ENCODE measurements at regions of chr3 and their contacts with region 1.

Region 1: GRCh38 chr3:183515968-183516851 is 39.3 kb downstream of the KLHL6 start:
- DNase-seq: peak; percentile 73
- H3K4me3 Mint-ChIP-seq: no peak overlapping the region
- H3K27ac Mint-ChIP-seq: peak overlapping the region; percentile 87
- H3K4me1 Mint-ChIP-seq: peaks cover 75% of the 10 kb centered on the region
- H3K27me3 Mint-ChIP-seq: no peaks in the 10 kb centered on the region

Region 2: DNA sequence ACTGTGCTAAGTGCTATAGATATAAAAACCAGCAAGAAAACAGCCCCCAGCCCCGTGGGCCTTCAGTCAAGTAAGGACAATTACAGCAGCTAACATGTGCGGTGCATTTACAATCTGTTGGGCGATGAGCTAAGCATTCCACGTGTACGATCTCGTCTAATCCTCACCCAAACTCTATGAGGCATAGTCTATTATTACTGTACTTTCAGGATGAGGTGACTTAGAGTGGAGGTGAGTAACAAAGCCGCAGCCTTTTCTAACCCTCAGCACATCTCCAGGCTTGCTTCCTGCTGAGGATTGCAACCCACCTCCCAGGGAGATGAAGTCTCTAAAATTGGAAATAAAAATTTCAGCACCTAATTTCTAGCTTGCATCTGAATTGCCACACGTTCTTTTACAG is 34.6 kb before region 1 on chr3:
- CTCF ChIA-PET with region 1: interaction called, 3 read pairs
- POLR2A ChIA-PET with region 1: no interaction called
- intact Hi-C with region 1: loop called (anchors 2 kb)
- DNase-seq: peak; percentile 49
- H3K4me3 Mint-ChIP-seq: no peak overlapping the region
- H3K27ac Mint-ChIP-seq: no peak overlapping the region
- H3K4me1 Mint-ChIP-seq: peaks cover 6% of the 10 kb centered on the region
- H3K27me3 Mint-ChIP-seq: no peaks in the 10 kb centered on the region

Region 3: GRCh38 chr3:183527428-183528379 is 11.5 kb after region 1 on chr3:
- CTCF ChIA-PET with region 1: interaction called, 6 read pairs
- POLR2A ChIA-PET with region 1: no interaction called
- intact Hi-C with region 1: loop called (anchors 1 kb)
- DNase-seq: peak; percentile 31
- H3K4me3 Mint-ChIP-seq: no peak overlapping the region
- H3K27ac Mint-ChIP-seq: peak overlapping the region; percentile 82
- H3K4me1 Mint-ChIP-seq: peaks cover 66% of the 10 kb centered on the region
- H3K27me3 Mint-ChIP-seq: no peaks in the 10 kb centered on the region

Region 4: GRCh38 chr3:183591881-183592521 is 75.8 kb after region 1 on chr3:
- CTCF ChIA-PET with region 1: interaction called, 4 read pairs
- POLR2A ChIA-PET with region 1: no interaction called
- intact Hi-C with region 1: loop called (anchors 1 kb)
- DNase-seq: no peak
- H3K4me3 Mint-ChIP-seq: peak overlapping the region; percentile 59
- H3K27ac Mint-ChIP-seq: peak overlapping the region; percentile 69
- H3K4me1 Mint-ChIP-seq: peaks cover 32% of the 10 kb centered on the region
- H3K27me3 Mint-ChIP-seq: no peaks in the 10 kb centered on the region

Region 5: GRCh38 chr3:183697610-183698317 is 181.6 kb after region 1 on chr3 and contains the start of gene YEATS2:
- CTCF ChIA-PET with region 1: interaction called, 3 read pairs
- POLR2A ChIA-PET with region 1: interaction called, 4 read pairs
- intact Hi-C with region 1: loop called (anchors 1 kb)
- DNase-seq: peak; percentile 88
- H3K4me3 Mint-ChIP-seq: peak within 1 kb of the TSS; percentile 82
- H3K27ac Mint-ChIP-seq: peak within 1 kb of the TSS; percentile 86
- H3K4me1 Mint-ChIP-seq: peaks cover 32% of the 10 kb centered on the region
- H3K27me3 Mint-ChIP-seq: no peaks in the 10 kb centered on the region
- total RNA-seq, gene YEATS2: 45.4 to 48.8 TPM